Endothelial cell of umbilical vein (primary cell): ENCODE measurements at regions of chr1 and their contacts with region 1.

Region 1: GRCh38 chr1:95043141-95043980 is 29.4 kb downstream of the ALG14 start:
- DNase-seq: peak; percentile 87
- H3K4me3 ChIP-seq: no peak overlapping the region
- H3K27ac ChIP-seq: no peak overlapping the region
- H3K4me1 ChIP-seq: no peaks in the 10 kb centered on the region
- H3K27me3 ChIP-seq: no peaks in the 10 kb centered on the region
- CTCF ChIP-seq: peak; percentile 92 to 98
- POLR2A ChIP-seq: no peak

Region 2: GRCh38 chr1:94481473-94481933 is 561.9 kb before region 1 on chr1:
- CTCF ChIA-PET with region 1: interaction called, 40 read pairs
- POLR2A ChIA-PET with region 1: no interaction called
- dilution Hi-C with region 1: no loop called
- intact Hi-C with region 1: loop called (anchors 2 kb)
- DNase-seq: peak; percentile 67
- H3K4me3 ChIP-seq: no peak overlapping the region
- H3K27ac ChIP-seq: no peak overlapping the region
- H3K4me1 ChIP-seq: no peaks in the 10 kb centered on the region
- H3K27me3 ChIP-seq: no peaks in the 10 kb centered on the region
- CTCF ChIP-seq: peak; percentile 83 to 86
- POLR2A ChIP-seq: no peak

Region 3: GRCh38 chr1:94812985-94813384 is 230.4 kb before region 1 on chr1:
- CTCF ChIA-PET with region 1: interaction called, 80 read pairs
- POLR2A ChIA-PET with region 1: no interaction called
- dilution Hi-C with region 1: no loop called
- intact Hi-C with region 1: no loop called
- DNase-seq: no peak
- H3K4me3 ChIP-seq: no peak overlapping the region
- H3K27ac ChIP-seq: no peak overlapping the region
- H3K4me1 ChIP-seq: peaks cover 5% of the 10 kb centered on the region
- H3K27me3 ChIP-seq: peaks cover 36 to 39% of the 10 kb centered on the region in 2 experiments
- CTCF ChIP-seq: no peak
- POLR2A ChIP-seq: no peak

Region 4: GRCh38 chr1:94854458-94855306 is 188.7 kb before region 1 on chr1:
- CTCF ChIA-PET with region 1: interaction called, 360 read pairs
- POLR2A ChIA-PET with region 1: interaction called, 12 read pairs
- dilution Hi-C with region 1: no loop called
- intact Hi-C with region 1: loop called (anchors 1 kb)
- DNase-seq: peak; percentile 94
- H3K4me3 ChIP-seq: peak overlapping the region in 2 of 3 experiments; percentile 20 to 27
- H3K27ac ChIP-seq: peak overlapping the region; percentile 57
- H3K4me1 ChIP-seq: peaks cover 16% of the 10 kb centered on the region
- H3K27me3 ChIP-seq: peaks cover 0 to 1% of the 10 kb centered on the region in 2 experiments
- CTCF ChIP-seq: peak; percentile 90 to 93
- POLR2A ChIP-seq: peak; percentile 48

Region 5: GRCh38 chr1:94892604-94893254 is 150.6 kb before region 1 on chr1:
- CTCF ChIA-PET with region 1: interaction called, 38 read pairs
- POLR2A ChIA-PET with region 1: no interaction called
- dilution Hi-C with region 1: no loop called
- intact Hi-C with region 1: no loop called
- DNase-seq: no peak
- H3K4me3 ChIP-seq: no peak overlapping the region
- H3K27ac ChIP-seq: no peak overlapping the region
- H3K4me1 ChIP-seq: no peaks in the 10 kb centered on the region
- H3K27me3 ChIP-seq: no peaks in the 10 kb centered on the region
- CTCF ChIP-seq: no peak
- POLR2A ChIP-seq: no peak

Region 6: GRCh38 chr1:94936861-94937620 is 106.3 kb before region 1 on chr1:
- CTCF ChIA-PET with region 1: interaction called, 35 read pairs
- POLR2A ChIA-PET with region 1: no interaction called
- dilution Hi-C with region 1: no loop called
- intact Hi-C with region 1: no loop called
- DNase-seq: peak; percentile 65
- H3K4me3 ChIP-seq: no peak overlapping the region
- H3K27ac ChIP-seq: peak overlapping the region; percentile 20
- H3K4me1 ChIP-seq: peaks cover 35% of the 10 kb centered on the region
- H3K27me3 ChIP-seq: no peaks in the 10 kb centered on the region
- CTCF ChIP-seq: no peak
- POLR2A ChIP-seq: no peak

Region 7: DNA sequence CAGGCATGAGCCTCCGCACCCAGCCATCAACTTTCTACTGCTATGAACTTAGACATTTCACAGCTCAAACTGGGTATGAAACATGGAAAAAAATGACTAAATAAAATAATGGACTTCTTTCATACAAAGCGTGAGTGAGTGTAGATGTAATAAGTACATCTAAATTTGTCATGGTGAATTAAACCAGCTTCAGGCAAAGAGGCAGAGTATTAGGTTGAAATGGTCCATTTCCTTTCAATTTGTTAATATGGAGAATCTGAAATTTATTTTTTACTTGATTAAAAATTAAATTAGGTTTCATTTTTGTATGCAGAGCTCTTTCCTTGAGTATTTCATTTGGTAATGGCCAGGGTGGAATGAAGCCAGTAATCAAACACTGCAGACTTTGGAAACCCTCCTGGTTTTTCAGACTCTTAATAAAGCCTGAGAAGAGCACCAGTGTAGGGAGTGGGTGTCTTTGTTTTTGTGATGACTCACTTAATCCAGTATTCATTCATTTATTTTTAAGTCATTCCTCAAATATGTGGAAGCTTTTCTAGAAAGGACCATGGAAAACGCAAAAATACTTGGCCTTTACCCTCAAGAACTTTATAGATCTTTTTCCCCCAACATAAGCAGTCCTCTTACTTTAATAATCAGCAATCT is 19.8 kb before region 1 on chr1:
- CTCF ChIA-PET with region 1: interaction called, 16 read pairs
- POLR2A ChIA-PET with region 1: no interaction called
- dilution Hi-C with region 1: no loop called
- intact Hi-C with region 1: loop called (anchors 2 kb)
- DNase-seq: peak; percentile 77
- H3K4me3 ChIP-seq: no peak overlapping the region
- H3K27ac ChIP-seq: no peak overlapping the region
- H3K4me1 ChIP-seq: peaks cover 39% of the 10 kb centered on the region
- H3K27me3 ChIP-seq: no peaks in the 10 kb centered on the region
- CTCF ChIP-seq: no peak
- POLR2A ChIP-seq: no peak

Region 8: DNA sequence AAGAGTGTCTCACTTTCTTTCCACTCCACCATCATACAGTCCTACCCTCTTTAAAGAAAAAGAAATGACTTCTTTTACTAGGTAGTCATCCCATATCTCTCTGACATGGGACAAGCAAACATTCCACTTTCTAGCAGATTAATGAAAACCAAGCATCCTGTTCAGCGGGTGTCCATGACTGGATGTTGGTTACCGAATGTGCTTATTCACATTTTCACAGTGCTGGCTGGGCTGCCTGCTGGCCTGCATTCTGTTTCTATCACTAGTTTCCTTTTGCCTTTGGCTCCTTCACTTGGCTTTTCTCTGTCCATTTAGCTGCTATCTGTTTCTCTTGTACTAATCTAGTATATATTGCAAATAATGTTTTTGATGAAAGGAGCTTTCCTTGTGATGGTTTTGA is 789.0 kb after region 1 on chr1:
- CTCF ChIA-PET with region 1: no interaction called
- POLR2A ChIA-PET with region 1: no interaction called
- dilution Hi-C with region 1: no loop called
- intact Hi-C with region 1: no loop called
- DNase-seq: no peak
- H3K4me3 ChIP-seq: no peak overlapping the region
- H3K27ac ChIP-seq: no peak overlapping the region
- H3K4me1 ChIP-seq: no peaks in the 10 kb centered on the region
- H3K27me3 ChIP-seq: no peaks in the 10 kb centered on the region
- CTCF ChIP-seq: no peak
- POLR2A ChIP-seq: no peak